Right ventricle myocardium superior (tissue), 1 donor: ENCODE measurements at regions of chr11 and their contacts with region 1.

Region 1: DNA sequence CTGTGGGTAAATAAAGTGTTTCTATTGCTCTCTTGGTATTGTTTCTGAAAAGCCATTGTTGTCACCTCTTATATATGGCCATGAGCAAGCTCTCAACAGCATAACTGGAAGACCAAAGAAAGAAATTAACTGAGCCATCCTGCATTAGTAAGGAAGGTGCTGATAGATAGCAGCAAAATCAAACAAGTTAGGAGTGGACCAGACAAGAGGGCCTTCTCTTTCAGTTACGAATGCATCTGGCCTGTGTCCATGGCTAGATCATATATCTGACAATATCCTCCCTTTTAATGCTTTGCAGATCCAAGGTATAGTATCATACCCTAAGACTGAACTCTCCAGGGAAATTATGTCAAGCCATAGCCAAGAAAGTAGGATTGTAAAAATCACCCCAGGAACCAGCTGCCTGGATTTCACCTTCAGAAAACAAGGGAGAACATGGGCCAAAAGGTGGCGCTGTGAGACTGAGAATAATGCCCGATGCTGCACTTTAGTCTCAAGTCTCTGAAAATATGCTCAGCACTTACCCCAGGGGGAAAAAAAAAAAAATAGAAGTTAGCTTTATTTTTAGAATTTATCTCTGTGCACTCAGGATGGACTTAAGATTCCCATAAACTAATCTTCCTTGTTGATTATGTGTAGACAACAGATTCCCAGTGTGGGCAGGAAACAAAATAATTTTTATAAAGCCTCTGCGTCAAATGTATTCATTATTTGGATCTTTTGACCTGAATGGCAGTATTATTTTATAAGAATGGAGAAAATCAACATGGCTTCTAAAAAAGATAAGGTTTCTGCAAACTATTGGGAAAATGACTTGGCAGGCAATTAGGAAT is 415.1 kb downstream of the ETS1 start:
- DNase-seq: peak; percentile 86
- ATAC-seq: peak; percentile 93

Region 2: DNA sequence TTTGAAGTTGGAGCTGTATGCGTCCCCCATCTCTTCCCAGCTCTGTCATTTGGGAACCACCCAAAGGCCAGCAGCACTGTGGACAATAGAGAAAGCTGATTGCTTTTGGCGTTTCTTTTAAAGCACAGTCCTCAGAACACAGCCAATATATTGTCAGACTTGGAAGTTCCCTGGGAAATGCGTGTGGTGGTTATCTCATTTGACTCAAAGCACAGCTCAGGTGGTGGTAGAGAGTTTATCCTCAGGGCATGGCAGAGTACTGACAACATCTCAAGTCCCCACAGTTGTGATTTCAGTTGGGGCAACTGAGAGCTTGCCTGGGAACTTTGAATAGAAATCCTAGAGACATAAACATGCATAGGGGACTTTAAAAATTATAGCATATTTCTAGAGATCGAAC is 186.2 kb before region 1 on chr11:
- intact Hi-C with region 1: no loop called
- DNase-seq: no peak
- ATAC-seq: no peak

Region 3: GRCh38 chr11:128116885-128117284 is 55.4 kb before region 1 on chr11:
- intact Hi-C with region 1: no loop called
- DNase-seq: no peak
- ATAC-seq: peak; percentile 20

Region 4: GRCh38 chr11:128630367-128631230 is 458.3 kb after region 1 on chr11:
- intact Hi-C with region 1: loop called (anchors 2 kb)
- DNase-seq: peak; percentile 89
- ATAC-seq: peak; percentile 97